Calu3 (cell line): ENCODE measurements at regions of chrX and their contacts with region 1.

Region 1: DNA sequence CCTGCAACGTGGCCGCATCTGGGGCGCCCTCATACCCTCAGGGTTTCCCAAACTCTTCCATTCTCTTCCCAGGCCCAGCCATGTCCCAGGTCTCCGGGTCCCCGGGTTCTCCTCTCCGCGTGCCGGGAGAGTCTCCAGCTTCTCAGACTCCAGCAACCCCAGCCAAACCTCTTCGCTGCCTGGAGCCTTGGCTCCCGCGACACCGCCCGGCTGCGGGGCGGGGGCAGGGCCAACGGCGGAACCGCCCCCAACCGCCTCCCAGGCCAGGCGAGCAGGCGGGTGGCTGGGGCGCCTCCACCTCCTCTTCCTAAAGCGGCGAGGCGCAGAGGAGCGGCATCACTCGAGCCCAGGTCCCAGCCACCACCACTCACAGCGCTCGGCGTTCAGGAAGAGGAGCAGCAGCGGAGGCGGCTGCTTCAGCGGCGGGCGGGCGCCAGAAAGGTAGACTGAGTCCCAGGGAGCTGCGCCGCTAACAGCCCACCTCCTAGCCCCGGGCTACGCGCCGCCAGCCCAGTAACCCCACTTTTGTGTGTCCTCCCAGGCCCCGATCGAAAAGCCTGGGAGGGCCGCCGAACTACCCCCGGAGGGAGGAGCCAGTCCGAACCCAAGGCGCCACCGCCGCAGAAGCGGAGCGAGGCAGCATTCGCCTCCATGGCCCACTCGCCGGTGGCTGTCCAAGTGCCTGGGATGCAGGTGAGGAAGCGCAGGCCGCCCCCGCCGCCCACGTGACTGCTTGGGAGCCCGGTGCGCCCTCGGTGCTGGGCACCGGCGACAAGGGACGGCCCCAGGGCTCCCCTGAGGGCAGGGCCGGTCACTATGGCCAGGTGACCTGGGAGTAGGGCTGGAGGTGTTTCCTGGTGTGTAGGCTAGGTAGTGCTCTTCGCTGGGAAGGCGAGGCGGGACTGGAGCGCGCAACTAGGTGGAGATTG is at the start of gene STK26:
- DNase-seq: peak; percentile 81
- H3K4me3 Mint-ChIP-seq: peak within 1 kb of the TSS; percentile 95
- H3K27ac Mint-ChIP-seq: peak within 1 kb of the TSS; percentile 86
- H3K4me1 Mint-ChIP-seq: peaks cover 11% of the 10 kb centered on the region
- H3K27me3 Mint-ChIP-seq: no peaks in the 10 kb centered on the region
- CTCF ChIP-seq: no peak
- total RNA-seq, gene STK26: 32.5 and 38.5 TPM in 2 replicates

Region 2: GRCh38 chrX:131830400-131831184 is 192.6 kb before region 1 on chrX:
- CTCF ChIA-PET with region 1: no interaction called
- intact Hi-C with region 1: loop called (anchors 10 kb)
- DNase-seq: peak; percentile 74
- H3K4me3 Mint-ChIP-seq: peak overlapping the region; percentile 71
- H3K27ac Mint-ChIP-seq: peak overlapping the region; percentile 60
- H3K4me1 Mint-ChIP-seq: peaks cover 10% of the 10 kb centered on the region
- H3K27me3 Mint-ChIP-seq: no peaks in the 10 kb centered on the region
- CTCF ChIP-seq: no peak

Region 3: DNA sequence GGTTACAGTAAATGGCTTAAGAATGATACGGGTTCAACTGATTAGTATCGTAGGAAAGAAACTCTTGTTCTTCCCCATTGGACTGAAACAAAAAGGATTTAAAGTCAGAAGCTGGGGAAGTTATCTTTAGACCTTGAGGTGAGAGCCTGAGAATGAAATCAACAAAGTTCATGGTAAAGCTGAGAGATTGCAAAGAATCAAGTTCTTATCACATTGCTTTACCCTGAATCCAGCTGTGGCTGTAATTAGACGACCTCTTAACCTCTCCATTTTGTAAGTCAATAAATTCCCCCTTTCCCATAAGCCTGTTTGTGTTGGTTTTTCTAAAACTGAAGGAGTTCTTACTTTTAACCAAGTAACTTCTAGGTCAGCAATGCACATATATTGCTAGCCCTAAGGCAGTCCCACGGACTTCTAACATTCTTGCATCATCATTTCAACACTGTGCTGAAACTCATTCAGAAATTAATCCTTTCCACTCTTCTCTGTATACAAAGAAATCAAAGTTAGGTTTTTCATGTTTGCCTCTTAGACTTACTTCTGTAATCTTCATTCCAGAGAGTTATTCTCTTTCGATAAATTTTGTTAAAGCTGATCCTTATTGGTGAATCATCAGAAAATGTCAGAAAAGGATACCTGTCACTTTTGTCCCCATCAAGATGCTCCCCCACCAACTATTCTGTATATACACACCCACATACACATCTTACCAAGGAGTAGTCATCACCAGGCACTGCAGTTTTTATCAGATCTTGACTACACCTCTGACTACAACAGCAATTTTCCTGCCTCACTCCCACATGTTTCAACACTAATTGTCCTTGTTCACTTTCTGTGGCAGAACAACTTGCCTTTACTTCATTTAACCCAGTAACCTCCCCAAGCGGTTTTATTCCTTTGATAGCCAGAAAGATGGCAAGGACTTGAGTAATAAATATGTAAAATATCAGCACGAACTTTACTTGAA is 78.0 kb before region 1 on chrX:
- CTCF ChIA-PET with region 1: no interaction called
- intact Hi-C with region 1: no loop called
- DNase-seq: no peak
- H3K4me3 Mint-ChIP-seq: no peak overlapping the region
- H3K27ac Mint-ChIP-seq: no peak overlapping the region
- H3K4me1 Mint-ChIP-seq: no peaks in the 10 kb centered on the region
- H3K27me3 Mint-ChIP-seq: no peaks in the 10 kb centered on the region
- CTCF ChIP-seq: no peak

Region 4: DNA sequence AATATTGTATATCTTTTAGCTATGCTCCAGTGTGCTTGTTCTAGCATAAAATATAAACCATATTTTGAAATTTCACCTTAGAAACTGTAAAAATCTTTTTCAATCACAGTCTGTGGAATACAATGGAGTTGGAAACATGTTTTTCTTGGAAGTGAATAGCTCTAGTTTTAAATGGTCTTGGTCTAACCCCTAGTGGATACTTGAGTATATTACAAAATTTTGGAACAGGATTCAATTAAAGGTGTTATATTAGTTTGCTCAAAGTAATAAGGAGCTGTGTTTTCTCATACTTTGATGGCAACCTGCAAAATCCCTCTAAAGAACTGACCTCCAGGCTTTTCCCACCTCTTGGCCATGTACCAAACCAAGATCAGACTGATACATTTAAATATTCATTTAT is 48.0 kb after region 1 on chrX:
- CTCF ChIA-PET with region 1: no interaction called
- intact Hi-C with region 1: loop called (anchors 5 kb)
- DNase-seq: no peak
- H3K4me3 Mint-ChIP-seq: no peak overlapping the region
- H3K27ac Mint-ChIP-seq: no peak overlapping the region
- H3K4me1 Mint-ChIP-seq: peaks cover 9% of the 10 kb centered on the region
- H3K27me3 Mint-ChIP-seq: no peaks in the 10 kb centered on the region
- CTCF ChIP-seq: no peak

Region 5: GRCh38 chrX:132086672-132087071 is 63.4 kb after region 1 on chrX:
- CTCF ChIA-PET with region 1: no interaction called
- intact Hi-C with region 1: no loop called
- DNase-seq: no peak
- H3K4me3 Mint-ChIP-seq: no peak overlapping the region
- H3K27ac Mint-ChIP-seq: no peak overlapping the region
- H3K4me1 Mint-ChIP-seq: no peaks in the 10 kb centered on the region
- H3K27me3 Mint-ChIP-seq: peaks cover 36% of the 10 kb centered on the region
- CTCF ChIP-seq: no peak